WTC11 (cell line): ENCODE measurements at regions of chr3 and their contacts with region 1.

Region 1: GRCh38 chr3:195909644-195910508 is 1.5 kb upstream of the TNK2 start:
- DNase-seq: peak; percentile 79
- ATAC-seq: peak; percentile 58
- H3K4me3 Mint-ChIP-seq: peak overlapping the region; percentile 76
- H3K27ac Mint-ChIP-seq: peak overlapping the region; percentile 23; the same call in 1 of the 2 replicates
- H3K4me1 Mint-ChIP-seq: peaks cover 45% of the 10 kb centered on the region
- H3K27me3 Mint-ChIP-seq: peaks cover 9% of the 10 kb centered on the region; the same call in 1 of the 2 replicates
- CTCF ChIP-seq: no peak

Region 2: DNA sequence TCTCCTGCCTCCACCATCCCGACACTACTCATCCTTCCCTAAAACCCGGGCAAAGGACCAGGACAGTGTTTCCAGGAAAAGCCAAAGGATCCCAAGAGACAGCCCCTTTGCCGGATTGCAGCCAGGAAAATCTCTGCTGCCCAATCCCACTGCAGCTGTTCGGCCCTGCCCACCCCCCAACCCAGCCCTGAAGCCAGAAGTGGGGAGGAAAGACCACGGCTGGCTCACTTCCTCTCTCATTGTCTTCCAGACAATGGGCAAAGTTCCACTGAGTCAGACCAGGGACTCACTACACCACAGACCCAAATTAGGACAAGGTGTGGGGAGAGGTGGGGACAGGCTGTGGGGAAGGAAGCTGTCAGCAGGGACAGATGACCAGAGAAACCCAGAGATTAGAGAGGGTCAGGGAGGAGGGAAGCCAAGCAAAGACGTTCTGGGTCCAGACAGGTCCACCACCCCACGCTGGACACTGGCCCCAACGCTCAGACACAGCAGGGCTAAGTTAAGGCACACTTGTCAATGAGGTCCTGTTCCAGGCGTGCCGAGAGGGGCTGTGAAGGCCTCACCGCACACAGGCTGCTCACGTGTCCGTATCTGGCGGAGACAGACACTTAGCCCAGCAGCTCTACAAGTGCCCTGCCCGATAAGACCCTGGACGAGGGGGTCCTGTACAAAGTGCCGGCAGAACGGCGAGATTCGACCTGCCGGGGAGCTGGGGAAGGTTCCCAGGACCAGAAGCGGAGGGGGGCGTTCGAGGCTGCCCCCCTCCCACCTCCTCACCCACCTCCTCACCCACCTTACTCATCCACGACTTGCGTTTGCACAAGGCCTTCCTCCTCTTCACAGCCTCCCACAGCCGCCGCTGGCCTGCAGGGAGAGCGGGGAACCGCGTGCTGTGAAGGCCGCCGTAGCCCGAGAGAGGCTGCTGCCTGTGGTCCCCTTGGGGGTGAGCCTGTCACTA is 23.4 kb before region 1 on chr3:
- CTCF ChIA-PET with region 1: interaction called, 23 read pairs
- POLR2A ChIA-PET with region 1: interaction called, 6 read pairs
- DNase-seq: no peak
- ATAC-seq: peak; percentile 23
- H3K4me3 Mint-ChIP-seq: no peak overlapping the region
- H3K27ac Mint-ChIP-seq: peak overlapping the region; percentile 83
- H3K4me1 Mint-ChIP-seq: peaks cover 40% of the 10 kb centered on the region
- H3K27me3 Mint-ChIP-seq: no peaks in the 10 kb centered on the region
- CTCF ChIP-seq: no peak

Region 3: GRCh38 chr3:195921334-195921791 is 11.5 kb after region 1 on chr3:
- CTCF ChIA-PET with region 1: interaction called, 16 read pairs
- POLR2A ChIA-PET with region 1: no interaction called
- DNase-seq: no peak
- ATAC-seq: peak; percentile 65
- H3K4me3 Mint-ChIP-seq: no peak overlapping the region
- H3K27ac Mint-ChIP-seq: no peak overlapping the region
- H3K4me1 Mint-ChIP-seq: peaks cover 9% of the 10 kb centered on the region
- H3K27me3 Mint-ChIP-seq: peaks cover 5% of the 10 kb centered on the region; the same call in 1 of the 2 replicates
- CTCF ChIP-seq: no peak

Region 4: GRCh38 chr3:196055683-196056270 is 145.9 kb after region 1 on chr3:
- CTCF ChIA-PET with region 1: no interaction called
- POLR2A ChIA-PET with region 1: no interaction called
- DNase-seq: no peak
- ATAC-seq: no peak
- H3K4me3 Mint-ChIP-seq: no peak overlapping the region
- H3K27ac Mint-ChIP-seq: peak overlapping the region; percentile 61
- H3K4me1 Mint-ChIP-seq: peaks cover 37% of the 10 kb centered on the region
- H3K27me3 Mint-ChIP-seq: no peaks in the 10 kb centered on the region
- CTCF ChIP-seq: no peak